GM12878 (cell line): ENCODE measurements at regions of chr19 and their contacts with region 1.

Region 1: DNA sequence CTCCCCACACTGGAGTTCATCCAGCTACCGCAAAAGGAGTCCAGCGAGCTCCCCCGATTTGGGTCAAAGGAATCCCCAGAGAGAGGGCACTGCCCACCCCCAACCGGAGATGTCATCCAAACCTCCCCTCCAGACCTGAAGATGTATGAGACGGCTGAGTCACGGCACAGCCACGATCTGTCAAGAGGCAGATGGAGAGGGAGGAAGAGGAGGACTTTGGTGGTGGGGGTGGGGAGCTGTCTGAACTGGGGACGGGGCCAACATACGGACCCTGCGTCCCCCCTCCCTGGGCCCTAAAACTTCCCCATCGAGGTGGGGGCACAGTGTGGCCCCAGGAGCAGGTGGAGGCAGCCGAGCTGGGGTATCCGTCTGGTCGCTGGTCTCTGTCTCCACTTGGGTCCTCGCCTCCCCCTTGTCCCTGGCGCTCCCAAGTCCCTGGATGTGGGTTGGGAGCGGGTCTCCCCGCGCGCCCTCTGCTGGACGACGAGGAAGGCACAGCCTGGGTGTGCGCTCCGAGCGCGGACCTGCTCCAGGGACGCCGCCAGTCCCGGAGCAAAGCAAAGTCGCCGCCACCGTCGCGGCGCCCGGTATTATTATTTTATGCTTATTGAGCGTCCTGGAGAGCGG is 3.8 kb downstream of the PDE4A start:
- DNase-seq: no peak
- ATAC-seq: peak; percentile 63
- H3K4me3 ChIP-seq: peak overlapping the region; percentile 62
- H3K27ac ChIP-seq: 0 out of 2 replicates have a peak overlapping the region, but pooled peaks have one; percentile 42
- H3K4me1 ChIP-seq: peaks cover 64% of the 10 kb centered on the region
- H3K27me3 ChIP-seq: peaks cover 0 to 10% of the 10 kb centered on the region in 2 experiments; a peak in 3 of 4 replicates
- CTCF ChIP-seq: peak; percentile 77 to 97 (median 84)
- EP300 ChIP-seq: 0 out of 4 replicates have a peak, but pooled peaks of 1 of the 2 experiments have one; percentile 2
- POLR2A ChIP-seq: no peak
- RAD21 ChIP-seq: peak; percentile 39; the same call in 1 of the 2 replicates

Region 2: DNA sequence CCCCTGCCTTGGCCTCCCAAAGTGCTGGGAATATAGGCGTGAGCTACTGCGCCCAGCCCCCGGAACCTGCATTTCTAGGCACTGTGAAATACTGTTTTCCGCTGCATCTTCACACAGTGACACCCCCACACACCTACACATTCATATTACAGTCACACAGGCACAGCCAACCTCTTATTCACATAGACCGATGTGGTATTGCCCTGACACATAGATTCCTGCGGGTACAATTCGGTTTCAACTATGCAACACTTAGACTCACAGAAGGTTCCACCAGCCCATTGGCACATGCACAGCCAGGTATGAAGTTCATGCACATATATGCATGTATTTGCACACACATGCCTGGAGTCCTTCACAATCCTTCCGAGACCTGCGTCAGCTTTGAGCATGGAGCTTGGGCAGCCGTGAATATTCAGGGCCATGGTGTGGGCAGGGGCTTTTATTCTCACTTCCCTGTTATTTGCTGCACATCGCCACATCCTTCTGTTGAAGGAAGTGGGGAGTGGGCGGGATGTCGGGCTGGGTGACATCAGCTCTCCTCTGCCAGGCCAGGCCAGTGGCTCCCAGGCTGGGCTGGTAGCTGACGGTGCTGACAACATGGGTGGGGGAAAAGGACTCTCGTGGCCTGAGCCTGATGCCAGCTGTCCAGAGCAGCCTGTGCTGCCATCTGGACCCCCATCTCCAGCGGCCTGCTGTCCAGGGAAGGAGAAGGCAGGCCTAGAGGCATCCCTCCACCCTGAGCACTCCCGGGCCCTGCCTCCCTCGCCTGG is 15.4 kb before region 1 on chr19:
- CTCF ChIA-PET with region 1: interaction called, 1,053 read pairs
- POLR2A ChIA-PET with region 1: interaction called, 122 read pairs
- RAD21 ChIA-PET with region 1: interaction called, 209 read pairs
- SMC1A ChIA-PET with region 1: interaction called, 364 read pairs
- in situ Hi-C with region 1: no loop called
- intact Hi-C with region 1: loop called (anchors 2 kb)
- DNase-seq: no peak
- ATAC-seq: peak; percentile 34
- H3K4me3 ChIP-seq: no peak overlapping the region
- H3K27ac ChIP-seq: no peak overlapping the region; the same call in 1 of the 2 replicates
- H3K4me1 ChIP-seq: peaks cover 58% of the 10 kb centered on the region
- H3K27me3 ChIP-seq: peaks cover 0 to 3% of the 10 kb centered on the region in 2 experiments; a peak in 2 of 4 replicates
- CTCF ChIP-seq: no peak
- EP300 ChIP-seq: peak; percentile 30 to 85; a peak in 3 of 4 replicates
- POLR2A ChIP-seq: peak; percentile 59
- RAD21 ChIP-seq: no peak